Heart left ventricle (tissue), 16 donors: ENCODE measurements at regions of chr5 and their contacts with region 1.

Region 1: GRCh38 chr5:111550279-111551020 is 38.1 kb upstream of the STARD4 start:
- DNase-seq: peak; percentile 71 to 89 (median 84)
- ATAC-seq: peak; percentile 88 to 94 (median 92)
- H3K4me3 ChIP-seq: peak overlapping the region in 3 of 12 donors; percentile 2 to 15 (median 2)
- H3K27ac ChIP-seq: peak overlapping the region; percentile 14 to 83 (median 74)
- H3K4me1 ChIP-seq: peaks cover 0 to 29% (median 14%) of the 10 kb centered on the region in 12 donors
- H3K27me3 ChIP-seq: no peaks in the 10 kb centered on the region
- CTCF ChIP-seq: peak; percentile 58 to 81 (median 75)
- POLR2A ChIP-seq: no peak

Region 2: DNA sequence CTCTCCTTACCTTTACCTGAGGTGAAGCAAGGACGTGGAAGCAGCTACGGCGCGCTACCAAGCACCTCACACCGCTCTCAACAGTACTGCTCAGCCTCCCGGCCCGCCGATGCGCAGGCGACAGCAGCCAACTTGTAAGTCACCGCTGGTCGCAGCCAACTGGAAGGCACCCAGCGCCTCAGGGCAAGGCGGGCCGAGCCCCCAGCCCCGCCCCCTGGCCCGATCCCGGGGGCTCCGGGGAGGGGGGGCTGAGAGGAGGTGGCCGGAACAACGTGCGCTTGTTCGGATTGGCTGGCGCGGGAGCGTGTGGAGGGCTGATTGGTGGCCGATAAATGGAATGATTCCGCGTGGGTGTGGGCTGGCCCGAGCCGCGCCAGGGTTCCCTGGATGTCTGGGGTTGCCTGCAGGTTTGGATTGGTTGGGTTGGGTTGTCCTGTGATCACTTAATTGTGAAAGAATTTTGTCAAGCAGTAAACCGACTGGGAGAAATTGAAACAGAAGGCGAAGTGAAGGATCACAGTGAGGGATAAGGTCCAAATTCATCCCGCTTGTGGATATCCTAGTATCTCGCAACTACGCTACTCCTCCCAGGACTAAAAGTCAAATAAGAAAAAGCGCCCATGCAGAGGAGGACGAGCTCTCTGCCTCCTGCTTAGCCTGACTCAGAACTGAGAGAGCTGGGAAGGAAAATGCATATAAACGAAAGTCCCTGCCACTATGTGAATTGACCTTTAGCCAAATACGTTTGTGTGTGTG is 37.9 kb before region 1 on chr5 and contains the start of gene STARD4:
- intact Hi-C with region 1: loop called in 1 of 10 experiments (anchors 2 kb)
- DNase-seq: peak; percentile 95 to 97 (median 96)
- ATAC-seq: peak; percentile 99
- H3K4me3 ChIP-seq: peak within 1 kb of the TSS; percentile 68 to 95 (median 84)
- H3K27ac ChIP-seq: peak within 1 kb of the TSS in 11 of 12 donors; percentile 74 to 93 (median 84)
- H3K4me1 ChIP-seq: peaks cover 0 to 37% (median 14%) of the 10 kb centered on the region in 12 donors
- H3K27me3 ChIP-seq: no peaks in the 10 kb centered on the region
- CTCF ChIP-seq: no peak
- POLR2A ChIP-seq: peak in 1 of 2 donors; percentile 75
- total RNA-seq, gene STARD4: 7.6 to 14.5 (median 9.4) TPM

Region 3: DNA sequence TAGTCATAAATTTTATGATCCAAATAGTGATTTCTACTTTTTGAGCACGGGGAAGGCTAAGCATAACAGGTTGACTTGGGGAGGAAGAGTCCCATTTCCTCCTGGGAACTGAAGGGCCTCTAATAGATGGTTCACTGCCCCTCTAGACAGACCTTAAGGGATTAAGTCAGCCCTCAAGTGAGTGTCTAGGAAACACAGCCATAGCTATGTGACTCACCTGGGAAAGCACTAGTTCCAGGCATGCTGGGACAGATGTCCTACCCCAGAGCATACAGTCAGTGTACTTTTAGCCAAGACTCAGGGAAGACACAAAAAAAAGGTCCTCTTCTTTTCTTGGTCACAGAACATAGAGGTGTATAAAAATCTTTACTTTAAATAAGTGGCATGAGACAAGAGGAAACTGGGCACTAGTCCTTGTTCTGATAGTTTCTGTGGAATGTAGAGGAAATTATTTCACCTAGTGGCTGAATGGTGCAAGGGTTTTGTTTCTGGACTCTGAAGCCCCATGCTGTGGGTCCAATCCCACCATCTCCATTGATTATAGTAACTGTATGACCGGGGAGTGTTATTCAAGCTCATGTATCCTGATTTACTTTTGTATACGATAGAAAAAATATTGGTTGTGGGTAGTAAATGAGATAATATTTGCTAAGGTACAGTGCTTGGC is 120.5 kb after region 1 on chr5:
- intact Hi-C with region 1: loop called in 1 of 10 experiments (anchors 10 kb)
- DNase-seq: no peak
- ATAC-seq: no peak
- H3K4me3 ChIP-seq: no peak overlapping the region
- H3K27ac ChIP-seq: no peak overlapping the region
- H3K4me1 ChIP-seq: no peaks in the 10 kb centered on the region
- H3K27me3 ChIP-seq: no peaks in the 10 kb centered on the region
- CTCF ChIP-seq: peak in 1 of 12 donors; percentile 23
- POLR2A ChIP-seq: no peak

Region 4: DNA sequence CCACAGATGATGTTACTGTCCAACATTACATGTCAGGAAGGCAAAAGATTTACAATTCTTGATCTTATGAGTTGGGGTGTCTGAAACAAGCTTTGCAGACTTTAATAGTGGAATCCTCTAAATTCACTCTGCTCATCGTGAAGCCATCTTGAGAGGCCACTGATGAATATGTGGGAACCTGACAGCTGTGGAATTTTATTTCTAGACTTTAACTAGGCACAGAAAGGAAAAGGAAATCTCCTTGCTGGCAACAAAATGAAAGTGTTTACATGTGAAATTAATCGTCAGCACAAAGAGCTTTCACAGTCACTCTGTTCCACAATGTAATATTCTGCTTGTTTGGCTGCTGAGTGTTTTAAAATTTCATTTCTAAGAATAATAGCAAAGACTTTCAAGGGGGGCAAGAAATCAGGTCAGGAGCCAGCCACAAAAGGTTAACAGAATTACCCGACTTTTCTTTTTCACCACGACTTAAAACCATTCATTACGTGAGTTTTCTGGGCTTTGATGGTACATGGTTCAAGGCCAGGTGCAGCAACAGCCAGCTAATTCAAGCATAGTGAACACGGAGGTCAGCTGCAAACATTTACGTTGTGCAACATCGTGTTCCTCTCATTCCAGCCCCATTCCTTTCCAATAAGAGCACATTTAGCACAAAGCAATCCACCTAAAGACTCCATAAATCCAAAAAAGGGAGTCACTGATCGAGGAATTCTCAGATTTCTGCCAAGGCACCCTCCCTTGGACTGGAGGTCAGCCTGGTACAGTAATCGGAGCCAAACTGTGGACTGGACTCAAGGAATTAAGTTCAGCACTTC is 191.9 kb after region 1 on chr5:
- intact Hi-C with region 1: loop called in 1 of 10 experiments (anchors 10 kb)
- DNase-seq: no peak
- ATAC-seq: peak in 3 of 4 donors; percentile 48 to 62 (median 53)
- H3K4me3 ChIP-seq: peak overlapping the region in 7 of 12 donors; percentile 1 to 27 (median 5)
- H3K27ac ChIP-seq: peak overlapping the region in 9 of 12 donors; percentile 1 to 61 (median 28)
- H3K4me1 ChIP-seq: peaks cover 3 to 93% (median 47%) of the 10 kb centered on the region in 12 donors
- H3K27me3 ChIP-seq: no peaks in the 10 kb centered on the region
- CTCF ChIP-seq: no peak
- POLR2A ChIP-seq: no peak

Region 5: DNA sequence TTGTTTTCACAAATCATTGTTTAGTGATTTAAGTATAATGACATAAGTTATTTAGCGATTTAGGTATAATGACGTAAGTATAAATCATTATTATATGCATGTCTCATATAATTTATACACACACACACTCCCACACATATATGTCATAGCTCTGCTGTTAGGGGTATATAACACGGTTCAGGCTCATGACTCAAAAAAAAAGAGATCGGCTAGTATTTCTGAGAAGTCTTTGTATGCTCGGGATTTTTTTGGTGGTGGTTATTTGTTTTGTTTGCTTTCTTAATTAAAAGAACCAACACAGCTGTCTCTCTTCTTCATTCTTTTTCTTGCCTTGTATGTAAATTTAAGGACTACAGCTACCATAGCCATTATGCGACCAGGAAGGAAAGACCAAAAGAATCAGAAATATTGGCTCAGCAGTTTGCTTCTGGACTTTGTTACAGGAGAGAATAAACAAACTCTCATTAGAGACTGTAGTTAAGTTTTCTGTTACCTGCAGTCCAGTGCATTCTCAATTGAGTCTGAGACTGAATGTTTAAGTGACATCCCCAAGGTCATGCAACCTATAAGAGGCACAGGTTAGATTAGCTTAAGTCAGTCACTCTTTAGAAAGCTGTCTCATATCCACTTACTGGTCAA is 289.7 kb after region 1 on chr5:
- intact Hi-C with region 1: loop called in 1 of 10 experiments (anchors 5 kb)
- DNase-seq: no peak
- ATAC-seq: no peak
- H3K4me3 ChIP-seq: no peak overlapping the region
- H3K27ac ChIP-seq: no peak overlapping the region
- H3K4me1 ChIP-seq: peaks cover 0 to 1% (median 0%) of the 10 kb centered on the region in 12 donors
- H3K27me3 ChIP-seq: no peaks in the 10 kb centered on the region
- CTCF ChIP-seq: no peak
- POLR2A ChIP-seq: no peak

Region 6: GRCh38 chr5:111954516-111955395 is 404.3 kb after region 1 on chr5:
- intact Hi-C with region 1: no loop called
- DNase-seq: no peak
- ATAC-seq: no peak
- H3K4me3 ChIP-seq: no peak overlapping the region
- H3K27ac ChIP-seq: no peak overlapping the region
- H3K4me1 ChIP-seq: peaks cover 0 to 7% (median 0%) of the 10 kb centered on the region in 12 donors
- H3K27me3 ChIP-seq: no peaks in the 10 kb centered on the region
- CTCF ChIP-seq: no peak
- POLR2A ChIP-seq: no peak

Region 7: GRCh38 chr5:111984044-111984443 is 433.6 kb after region 1 on chr5:
- intact Hi-C with region 1: loop called in 1 of 10 experiments (anchors 5 kb)
- DNase-seq: peak in 4 of 5 donors; percentile 37 to 52 (median 44)
- ATAC-seq: peak; percentile 47 to 94 (median 76)
- H3K4me3 ChIP-seq: no peak overlapping the region
- H3K27ac ChIP-seq: peak overlapping the region in 8 of 12 donors; percentile 4 to 46 (median 32)
- H3K4me1 ChIP-seq: peaks cover 0 to 20% (median 7%) of the 10 kb centered on the region in 12 donors
- H3K27me3 ChIP-seq: no peaks in the 10 kb centered on the region
- CTCF ChIP-seq: no peak
- POLR2A ChIP-seq: no peak

Region 8: GRCh38 chr5:112012104-112012503 is 461.7 kb after region 1 on chr5:
- intact Hi-C with region 1: loop called in 1 of 10 experiments (anchors 5 kb)
- DNase-seq: peak in 2 of 5 donors; percentile 22 to 32
- ATAC-seq: peak in 3 of 4 donors; percentile 32 to 92 (median 53)
- H3K4me3 ChIP-seq: no peak overlapping the region
- H3K27ac ChIP-seq: peak overlapping the region in 6 of 12 donors; percentile 15 to 54 (median 40)
- H3K4me1 ChIP-seq: peaks cover 0 to 19% (median 12%) of the 10 kb centered on the region in 12 donors
- H3K27me3 ChIP-seq: no peaks in the 10 kb centered on the region
- CTCF ChIP-seq: no peak
- POLR2A ChIP-seq: no peak